Activated CD4-positive, alpha-beta T cell treated with anti-CD3 and anti-CD28 coated beads for 36 hours (primary cell): ENCODE measurements at regions of chr12 and their contacts with region 1.

Region 1: DNA sequence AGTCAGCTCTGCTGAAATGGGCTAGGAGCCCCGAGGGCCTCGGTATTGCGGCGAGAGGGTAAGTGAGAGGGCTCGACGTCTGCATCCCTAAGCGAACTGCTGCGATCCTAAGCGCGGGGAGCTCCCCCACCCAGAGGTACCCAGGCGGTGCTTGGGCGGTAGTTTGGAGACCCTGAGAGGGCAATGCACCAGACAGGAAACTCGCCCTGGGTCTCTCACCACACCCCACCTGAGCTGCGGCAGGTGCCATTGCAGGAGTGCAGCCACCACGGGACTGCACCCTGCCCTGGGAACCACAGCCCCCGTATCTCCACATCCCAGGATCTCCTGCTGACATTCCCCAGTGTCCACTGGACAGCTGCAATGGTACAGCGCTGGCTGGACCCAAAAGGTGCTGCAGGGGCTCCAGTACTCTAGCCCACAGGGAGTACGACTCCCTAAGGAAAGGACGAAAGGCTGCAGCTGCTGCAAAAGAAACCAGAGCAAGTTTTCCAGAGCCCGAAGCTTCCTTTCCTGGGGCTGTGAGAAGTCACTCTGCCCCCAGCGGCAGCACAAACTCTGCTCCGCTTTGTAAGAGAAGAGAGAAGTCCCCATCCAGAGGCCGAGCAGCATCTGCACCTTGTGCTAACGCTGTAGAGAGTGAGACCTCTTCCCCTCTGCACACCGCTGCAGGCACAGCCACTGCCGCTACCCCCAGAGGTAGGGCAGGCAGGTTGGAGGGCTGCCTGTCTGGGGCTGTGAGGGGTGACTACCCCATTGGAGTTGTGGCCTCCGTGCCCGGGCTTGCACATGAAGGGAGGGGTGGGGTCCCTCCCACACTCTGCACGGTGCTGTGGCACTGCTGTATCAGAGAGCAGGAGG is 31.1 kb upstream of the MON2 start:
- DNase-seq: peak; percentile 68
- ATAC-seq: peak; percentile 85
- H3K4me3 Mint-ChIP-seq: peak overlapping the region; percentile 67
- H3K27ac Mint-ChIP-seq: no peak overlapping the region
- H3K4me1 Mint-ChIP-seq: peaks cover 13% of the 10 kb centered on the region
- H3K27me3 Mint-ChIP-seq: peaks cover 19% of the 10 kb centered on the region

Region 2: DNA sequence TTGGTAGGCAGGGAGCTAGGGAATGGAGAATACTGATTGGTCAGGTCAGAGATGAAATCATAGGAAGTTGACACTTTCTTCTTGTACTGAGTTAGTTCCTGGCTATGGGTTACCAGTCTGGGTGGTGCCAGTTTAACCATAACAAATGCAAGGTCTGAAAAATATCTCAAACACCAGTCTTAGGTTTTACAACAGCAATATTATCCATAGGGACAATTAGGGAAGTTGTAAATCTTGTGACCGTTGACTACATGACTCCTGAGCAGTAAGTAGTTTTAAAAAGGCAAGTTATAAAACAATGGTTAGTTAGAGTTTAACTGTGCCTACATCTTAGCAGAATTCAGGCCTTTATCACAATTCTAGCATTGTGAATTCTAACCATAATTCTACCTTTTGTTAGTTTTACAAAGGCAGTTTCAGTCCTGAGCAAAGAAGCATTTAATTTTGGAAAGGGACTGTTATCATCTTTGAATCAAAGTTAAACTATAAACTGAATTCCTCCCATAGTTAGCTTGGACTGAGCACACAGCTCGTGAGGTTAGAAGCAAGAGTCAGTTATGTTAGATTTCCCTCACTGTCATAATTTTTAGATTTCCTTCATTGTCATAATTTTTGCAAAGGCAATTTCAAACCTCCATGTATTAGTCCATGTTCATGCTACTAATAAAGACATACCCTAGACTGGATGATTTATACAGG is 11.4 kb after region 1 on chr12:
- CTCF ChIA-PET with region 1: interaction called, 16 read pairs
- POLR2A ChIA-PET with region 1: no interaction called
- intact Hi-C with region 1: no loop called
- DNase-seq: no peak
- ATAC-seq: no peak
- H3K4me3 Mint-ChIP-seq: no peak overlapping the region
- H3K27ac Mint-ChIP-seq: no peak overlapping the region
- H3K4me1 Mint-ChIP-seq: no peaks in the 10 kb centered on the region
- H3K27me3 Mint-ChIP-seq: peaks cover 2% of the 10 kb centered on the region

Region 3: DNA sequence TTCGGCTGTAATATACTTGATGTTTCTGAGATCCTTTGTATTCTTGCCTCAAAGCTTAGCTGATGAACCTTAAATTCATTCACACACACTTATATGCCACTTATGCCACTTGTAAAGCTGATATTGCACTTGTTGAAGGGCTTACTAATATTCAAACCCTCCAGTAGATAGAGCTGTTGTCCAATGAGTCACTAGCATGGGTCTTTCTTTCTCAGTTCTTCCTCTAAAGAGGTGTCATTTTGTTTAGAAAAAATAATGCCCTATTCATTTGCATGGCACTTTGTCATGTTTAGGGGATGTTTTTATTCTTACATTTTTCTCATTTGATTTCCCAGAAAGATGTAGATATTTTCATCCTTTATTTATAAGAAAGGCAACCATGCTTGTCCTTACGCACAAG is 87.5 kb after region 1 on chr12:
- CTCF ChIA-PET with region 1: interaction called, 8 read pairs
- POLR2A ChIA-PET with region 1: no interaction called
- intact Hi-C with region 1: loop called in 1 of 2 experiments (anchors 2 kb)
- DNase-seq: no peak
- ATAC-seq: peak; percentile 91
- H3K4me3 Mint-ChIP-seq: no peak overlapping the region
- H3K27ac Mint-ChIP-seq: no peak overlapping the region
- H3K4me1 Mint-ChIP-seq: peaks cover 49% of the 10 kb centered on the region
- H3K27me3 Mint-ChIP-seq: no peaks in the 10 kb centered on the region

Region 4: GRCh38 chr12:62581288-62582064 is 145.9 kb after region 1 on chr12:
- CTCF ChIA-PET with region 1: interaction called, 6 read pairs
- POLR2A ChIA-PET with region 1: no interaction called
- intact Hi-C with region 1: loop called in 1 of 2 experiments (anchors 5 kb)
- DNase-seq: no peak
- ATAC-seq: no peak
- H3K4me3 Mint-ChIP-seq: no peak overlapping the region
- H3K27ac Mint-ChIP-seq: no peak overlapping the region
- H3K4me1 Mint-ChIP-seq: no peaks in the 10 kb centered on the region
- H3K27me3 Mint-ChIP-seq: no peaks in the 10 kb centered on the region

Region 5: DNA sequence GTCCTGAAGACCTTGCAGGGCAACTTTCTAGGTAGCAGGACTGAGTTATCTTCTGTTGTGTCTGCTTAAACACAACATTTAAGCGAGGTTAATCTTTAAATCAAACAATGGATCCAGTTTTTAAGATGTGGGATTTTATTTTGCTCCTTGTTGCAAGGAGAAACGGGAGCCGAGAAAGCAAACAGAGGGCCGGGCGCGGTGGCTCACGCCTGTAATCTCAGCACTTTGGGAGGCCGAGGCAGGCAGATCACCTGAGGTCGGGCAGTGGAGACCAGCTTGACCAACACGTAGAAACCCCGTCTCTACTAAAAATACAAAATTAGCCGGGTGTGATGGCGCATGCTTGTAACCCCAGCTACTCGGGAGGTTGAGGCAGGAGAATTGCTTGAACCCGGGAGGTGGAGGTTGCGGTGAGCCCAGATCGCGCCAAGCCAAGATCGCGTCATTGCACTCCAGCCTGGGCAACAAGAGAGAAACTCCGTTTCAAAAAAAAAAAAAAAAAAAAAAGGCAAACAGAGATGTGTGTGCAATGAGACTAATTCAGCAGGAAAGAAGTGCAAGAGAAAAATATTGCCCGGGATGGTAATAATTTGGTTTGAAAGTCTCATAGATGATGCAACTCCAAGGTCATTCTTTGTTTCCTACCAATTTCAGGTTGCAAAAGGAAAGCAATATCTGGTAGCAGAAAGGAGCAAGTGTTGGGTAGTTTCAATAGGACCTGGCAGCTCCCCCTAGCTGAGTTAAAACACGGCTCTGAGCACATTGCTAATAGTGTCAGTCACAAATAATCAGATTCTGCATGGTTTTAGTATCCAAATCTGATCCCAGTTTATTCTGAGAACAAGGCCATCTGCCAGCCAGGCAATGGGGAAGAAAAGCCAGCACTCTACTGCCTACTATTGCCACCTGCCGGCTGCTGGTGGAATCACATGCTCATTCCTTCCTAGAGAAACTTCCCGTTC is 358.0 kb after region 1 on chr12:
- CTCF ChIA-PET with region 1: interaction called, 106 read pairs
- POLR2A ChIA-PET with region 1: interaction called, 3 read pairs
- intact Hi-C with region 1: loop called (anchors 1 kb)
- DNase-seq: peak; percentile 84
- ATAC-seq: peak; percentile 55
- H3K4me3 Mint-ChIP-seq: no peak overlapping the region
- H3K27ac Mint-ChIP-seq: no peak overlapping the region
- H3K4me1 Mint-ChIP-seq: peaks cover 3% of the 10 kb centered on the region
- H3K27me3 Mint-ChIP-seq: peaks cover 2% of the 10 kb centered on the region

Region 6: DNA sequence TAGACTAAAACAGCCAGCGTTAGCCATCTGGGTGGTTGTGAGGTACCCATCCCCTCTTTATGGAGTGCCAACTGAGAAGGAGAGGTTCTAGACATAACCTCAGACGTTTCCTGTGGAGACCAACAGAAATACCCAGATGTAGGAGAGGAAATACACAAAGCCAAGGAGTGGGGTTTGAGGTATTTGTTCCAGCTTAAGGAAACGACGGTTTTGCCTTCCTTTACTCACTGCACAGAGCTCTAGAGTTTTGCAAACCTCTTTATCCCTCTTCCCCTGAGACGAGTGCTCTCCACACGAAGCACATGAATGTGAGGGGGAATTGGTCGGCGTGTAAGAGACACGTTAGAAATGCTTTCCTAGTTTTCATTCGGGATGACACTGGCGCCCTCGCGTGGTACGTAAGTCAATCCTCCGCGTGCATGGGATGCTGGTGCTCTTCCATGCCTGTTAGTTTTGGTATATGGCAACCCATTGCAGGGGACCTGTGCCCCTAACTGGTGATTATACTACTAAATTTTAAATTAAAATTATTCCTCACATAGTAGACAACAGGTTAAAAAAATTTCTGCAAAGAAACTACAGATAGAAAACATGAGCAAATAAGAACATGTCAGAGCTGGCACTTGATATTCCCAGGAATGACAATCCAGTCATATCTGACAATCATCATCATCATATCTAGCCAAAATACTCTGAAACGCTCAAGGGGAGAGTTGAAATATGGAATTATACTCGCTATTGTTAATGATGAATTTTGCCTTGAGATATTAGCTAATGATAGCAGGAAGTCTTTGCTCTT is 377.7 kb after region 1 on chr12:
- CTCF ChIA-PET with region 1: interaction called, 10 read pairs
- POLR2A ChIA-PET with region 1: no interaction called
- intact Hi-C with region 1: loop called (anchors 1 to 5 kb)
- DNase-seq: peak; percentile 68
- ATAC-seq: peak; percentile 65
- H3K4me3 Mint-ChIP-seq: peak overlapping the region; percentile 43
- H3K27ac Mint-ChIP-seq: peak overlapping the region; percentile 6
- H3K4me1 Mint-ChIP-seq: peaks cover 19% of the 10 kb centered on the region
- H3K27me3 Mint-ChIP-seq: peaks cover 5% of the 10 kb centered on the region